ENCODE measurements at regions of chr3 and their contacts with region 1.

Region 1: GRCh38 chr3:58630076-58630709 is 36.4 kb downstream of the FAM3D start:
- DNase-seq: peak; percentile 71
- H3K4me3 Mint-ChIP-seq: no peak overlapping the region
- H3K27ac Mint-ChIP-seq: no peak overlapping the region
- H3K4me1 Mint-ChIP-seq: peaks cover 4% of the 10 kb centered on the region
- H3K27me3 Mint-ChIP-seq: no peaks in the 10 kb centered on the region

Region 2: GRCh38 chr3:58568572-58569286 is 61.5 kb before region 1 on chr3:
- CTCF ChIA-PET with region 1: interaction called, 19 read pairs
- POLR2A ChIA-PET with region 1: no interaction called
- DNase-seq: peak; percentile 70
- H3K4me3 Mint-ChIP-seq: no peak overlapping the region
- H3K27ac Mint-ChIP-seq: no peak overlapping the region
- H3K4me1 Mint-ChIP-seq: peaks cover 4% of the 10 kb centered on the region
- H3K27me3 Mint-ChIP-seq: peaks cover 6% of the 10 kb centered on the region

Region 3: DNA sequence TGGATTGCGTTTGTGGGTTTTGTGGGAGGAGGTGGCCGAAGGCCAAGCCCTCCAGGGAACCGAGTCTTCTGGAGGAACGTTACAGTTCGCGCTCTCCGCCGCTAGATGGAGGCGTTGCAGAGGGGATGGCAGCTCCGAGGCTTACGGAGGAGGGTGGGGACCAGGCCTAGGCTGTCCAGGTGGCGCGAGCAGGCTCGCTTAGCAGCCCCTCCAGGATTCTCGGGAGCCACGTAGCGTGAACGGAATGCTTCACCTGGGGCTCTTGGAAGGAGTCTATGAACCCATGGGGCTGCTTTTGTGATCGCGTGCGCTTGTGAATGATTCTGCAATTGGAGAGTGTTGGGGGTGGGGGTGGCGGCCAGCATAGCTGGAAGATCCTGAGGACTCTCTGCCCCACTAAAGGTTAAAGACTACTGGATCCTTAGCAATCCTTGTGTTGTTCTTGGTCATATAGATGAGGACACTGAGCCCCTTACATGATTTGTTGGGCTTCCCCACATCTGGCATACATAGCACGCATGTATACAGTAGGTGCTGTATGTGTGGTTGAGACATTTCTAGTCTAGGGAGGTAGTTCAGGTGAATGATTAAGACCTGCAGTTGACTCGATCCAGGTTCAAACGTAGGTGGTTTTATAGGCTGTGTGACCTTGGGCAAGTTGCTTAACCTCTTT is 10.6 kb after region 1 on chr3:
- CTCF ChIA-PET with region 1: interaction called, 15 read pairs
- POLR2A ChIA-PET with region 1: interaction called, 3 read pairs
- DNase-seq: peak; percentile 61
- H3K4me3 Mint-ChIP-seq: no peak overlapping the region
- H3K27ac Mint-ChIP-seq: no peak overlapping the region
- H3K4me1 Mint-ChIP-seq: no peaks in the 10 kb centered on the region
- H3K27me3 Mint-ChIP-seq: no peaks in the 10 kb centered on the region

Region 4: DNA sequence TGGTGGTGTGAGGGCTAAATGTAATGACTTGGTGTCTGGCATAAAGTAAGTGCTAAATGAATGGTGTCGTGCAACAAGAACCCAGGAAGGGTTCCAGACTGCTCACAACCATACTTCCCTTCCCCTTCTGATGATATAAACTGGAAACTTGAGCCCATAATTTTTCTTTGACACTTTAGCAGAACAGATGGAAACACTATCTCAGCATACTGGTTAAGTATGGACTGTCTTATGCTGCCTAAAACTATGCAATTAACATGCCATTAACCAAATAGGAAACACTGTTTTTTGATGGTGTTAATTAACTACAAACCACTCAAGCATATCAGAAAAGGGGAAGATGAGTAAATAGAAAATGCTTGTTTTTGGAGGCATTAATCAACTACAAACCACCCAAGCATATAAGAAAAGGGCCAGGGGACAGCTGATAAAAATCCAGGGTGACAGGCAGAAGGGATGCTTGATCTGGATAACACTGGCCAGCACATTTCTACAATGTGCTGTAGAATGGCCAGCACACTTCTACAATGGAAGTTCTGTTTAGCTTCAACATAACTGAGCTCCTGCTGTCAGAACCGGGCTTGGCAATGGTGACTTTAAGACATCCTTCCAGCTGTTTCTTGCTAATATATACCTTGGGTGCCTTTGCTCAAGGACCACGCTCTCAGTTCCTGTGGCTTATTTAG is 121.8 kb after region 1 on chr3:
- CTCF ChIA-PET with region 1: no interaction called
- POLR2A ChIA-PET with region 1: no interaction called
- DNase-seq: no peak
- H3K4me3 Mint-ChIP-seq: no peak overlapping the region
- H3K27ac Mint-ChIP-seq: no peak overlapping the region
- H3K4me1 Mint-ChIP-seq: no peaks in the 10 kb centered on the region
- H3K27me3 Mint-ChIP-seq: peaks cover 14% of the 10 kb centered on the region

Measured in activated CD4-positive, alpha-beta T cell treated with anti-CD3 and anti-CD28 coated beads, Interleukin-2, amount 10 ng/mL, durations not matched to agents 7 days and 5 days (primary cell).